OCI-LY7 (cell line): ENCODE measurements at regions of chr11 and their contacts with region 1.

Region 1: GRCh38 chr11:59207988-59208451 is 4.7 kb downstream of the MPEG1 start:
- DNase-seq: peak; percentile 68
- H3K4me3 ChIP-seq: no peak overlapping the region
- H3K27ac ChIP-seq: no peak overlapping the region
- H3K4me1 ChIP-seq: peaks cover 16% of the 10 kb centered on the region
- CTCF ChIP-seq: peak; percentile 89

Region 2: GRCh38 chr11:58900479-58901420 is 307.3 kb before region 1 on chr11:
- CTCF ChIA-PET with region 1: no interaction called
- POLR2A ChIA-PET with region 1: no interaction called
- intact Hi-C with region 1: no loop called
- DNase-seq: peak; percentile 30
- H3K4me3 ChIP-seq: no peak overlapping the region
- H3K27ac ChIP-seq: no peak overlapping the region
- H3K4me1 ChIP-seq: no peaks in the 10 kb centered on the region
- CTCF ChIP-seq: peak; percentile 75

Region 3: DNA sequence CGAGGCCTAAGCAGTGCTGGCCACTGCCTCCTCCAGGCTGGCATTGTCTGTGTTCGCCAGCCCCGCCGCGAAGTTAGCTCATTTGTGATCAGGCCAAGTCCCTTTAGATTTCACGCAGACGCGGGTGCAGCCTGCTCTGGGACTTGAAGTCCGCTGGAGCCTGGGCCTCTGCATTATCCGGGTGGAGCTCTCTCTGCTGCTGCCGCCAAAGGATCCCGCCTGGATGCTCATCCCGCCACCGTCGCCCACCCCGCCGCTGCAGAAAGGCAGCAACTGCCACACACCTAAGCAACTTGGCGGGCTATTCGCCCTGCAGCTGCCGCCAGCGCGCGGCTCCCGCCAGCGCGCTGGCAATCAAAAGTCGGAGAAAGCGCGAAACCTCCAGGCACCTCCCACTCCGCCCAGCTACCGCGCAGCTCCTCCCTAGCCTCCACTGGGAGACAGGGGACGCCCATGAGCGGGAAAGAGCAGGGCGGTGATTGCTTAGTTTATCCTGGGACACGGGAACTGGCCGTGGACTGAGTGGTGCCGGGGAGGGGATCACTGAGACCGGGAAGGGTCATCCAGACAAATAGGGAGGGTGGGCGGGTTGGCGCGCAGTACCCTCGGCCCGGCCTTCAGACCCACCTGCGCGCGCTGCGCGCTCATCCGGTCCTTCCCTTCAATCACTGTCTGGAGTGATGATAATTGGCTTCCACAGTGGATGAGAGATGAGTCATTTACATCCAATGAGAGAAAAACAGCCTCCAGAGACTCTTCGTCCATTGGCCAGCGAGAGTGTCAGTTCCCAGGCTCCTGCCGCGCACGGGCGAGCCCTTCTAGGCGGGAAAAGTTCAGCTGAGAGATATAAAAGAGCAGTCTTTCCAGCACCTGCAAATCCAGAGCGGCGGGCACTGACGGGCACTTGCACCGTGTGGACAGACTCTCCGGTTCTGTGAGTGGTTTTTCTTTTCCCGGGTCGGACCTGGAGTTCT is 101.4 kb before region 1 on chr11 and contains the start of gene FAM111B:
- CTCF ChIA-PET with region 1: no interaction called
- POLR2A ChIA-PET with region 1: no interaction called
- intact Hi-C with region 1: no loop called
- DNase-seq: peak; percentile 91
- H3K4me3 ChIP-seq: peak within 1 kb of the TSS; percentile 88
- H3K27ac ChIP-seq: peak within 1 kb of the TSS; percentile 70
- H3K4me1 ChIP-seq: peaks cover 77% of the 10 kb centered on the region
- CTCF ChIP-seq: peak; percentile 35
- total RNA-seq, gene FAM111B: 30.3 and 37.6 TPM in 2 replicates

Region 4: GRCh38 chr11:59171508-59172322 is 36.3 kb before region 1 on chr11 and contains the start of gene DTX4:
- CTCF ChIA-PET with region 1: interaction called, 3 read pairs
- POLR2A ChIA-PET with region 1: interaction called, 3 read pairs
- intact Hi-C with region 1: loop called (anchors 1 kb)
- DNase-seq: peak; percentile 92
- H3K4me3 ChIP-seq: peak within 1 kb of the TSS; percentile 77
- H3K27ac ChIP-seq: peak within 1 kb of the TSS; percentile 31
- H3K4me1 ChIP-seq: peaks cover 11% of the 10 kb centered on the region
- CTCF ChIP-seq: peak; percentile 88
- total RNA-seq, gene DTX4: 0.70 and 1.4 TPM in 2 replicates

Region 5: GRCh38 chr11:59380263-59381059 is 172.4 kb after region 1 on chr11:
- CTCF ChIA-PET with region 1: no interaction called
- POLR2A ChIA-PET with region 1: no interaction called
- intact Hi-C with region 1: no loop called
- DNase-seq: no peak
- H3K4me3 ChIP-seq: no peak overlapping the region
- H3K27ac ChIP-seq: no peak overlapping the region
- H3K4me1 ChIP-seq: no peaks in the 10 kb centered on the region
- CTCF ChIP-seq: no peak